Activated CD8-positive, alpha-beta T cell treated with anti-CD3 and anti-CD28 coated beads for 36 hours (primary cell): ENCODE measurements at regions of chr17 and their contacts with region 1.

Region 1: GRCh38 chr17:29369831-29370735 is 20.1 kb upstream of the TAOK1 start:
- DNase-seq: peak; percentile 57
- ATAC-seq: peak; percentile 95
- H3K4me3 Mint-ChIP-seq: no peak overlapping the region
- H3K27ac Mint-ChIP-seq: no peak overlapping the region
- H3K4me1 Mint-ChIP-seq: no peaks in the 10 kb centered on the region
- H3K27me3 Mint-ChIP-seq: no peaks in the 10 kb centered on the region
- CTCF ChIP-seq: peak; percentile 82

Region 2: DNA sequence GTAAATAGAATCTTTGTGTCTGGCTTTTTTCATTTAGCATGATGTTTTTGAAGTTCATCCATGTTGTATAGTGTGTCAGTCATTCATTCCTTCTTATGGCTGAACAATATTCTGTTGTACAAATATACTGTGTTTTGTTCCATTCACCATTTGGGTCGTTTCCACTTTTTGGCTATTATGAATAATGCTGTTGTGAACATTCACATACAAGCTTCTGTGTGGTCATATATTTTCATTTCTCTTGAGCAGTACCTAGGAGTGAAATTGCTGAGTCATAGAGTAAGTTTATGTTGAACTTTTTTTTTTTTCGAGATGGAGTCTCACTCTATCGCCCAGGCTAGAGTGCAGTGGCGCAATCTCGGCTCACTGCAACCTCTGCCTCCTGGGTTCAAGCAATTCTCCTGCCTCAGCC is 12.3 kb before region 1 on chr17:
- CTCF ChIA-PET with region 1: interaction called, 20 read pairs
- POLR2A ChIA-PET with region 1: no interaction called
- intact Hi-C with region 1: no loop called
- DNase-seq: no peak
- ATAC-seq: peak; percentile 49
- H3K4me3 Mint-ChIP-seq: no peak overlapping the region
- H3K27ac Mint-ChIP-seq: no peak overlapping the region
- H3K4me1 Mint-ChIP-seq: peaks cover 4% of the 10 kb centered on the region
- H3K27me3 Mint-ChIP-seq: no peaks in the 10 kb centered on the region
- CTCF ChIP-seq: no peak

Region 3: GRCh38 chr17:29451121-29451742 is 81.1 kb after region 1 on chr17:
- CTCF ChIA-PET with region 1: interaction called, 10 read pairs
- POLR2A ChIA-PET with region 1: no interaction called
- intact Hi-C with region 1: no loop called
- DNase-seq: no peak
- ATAC-seq: no peak
- H3K4me3 Mint-ChIP-seq: no peak overlapping the region
- H3K27ac Mint-ChIP-seq: peak overlapping the region; percentile 1
- H3K4me1 Mint-ChIP-seq: peaks cover 20% of the 10 kb centered on the region
- H3K27me3 Mint-ChIP-seq: no peaks in the 10 kb centered on the region
- CTCF ChIP-seq: no peak

Region 4: DNA sequence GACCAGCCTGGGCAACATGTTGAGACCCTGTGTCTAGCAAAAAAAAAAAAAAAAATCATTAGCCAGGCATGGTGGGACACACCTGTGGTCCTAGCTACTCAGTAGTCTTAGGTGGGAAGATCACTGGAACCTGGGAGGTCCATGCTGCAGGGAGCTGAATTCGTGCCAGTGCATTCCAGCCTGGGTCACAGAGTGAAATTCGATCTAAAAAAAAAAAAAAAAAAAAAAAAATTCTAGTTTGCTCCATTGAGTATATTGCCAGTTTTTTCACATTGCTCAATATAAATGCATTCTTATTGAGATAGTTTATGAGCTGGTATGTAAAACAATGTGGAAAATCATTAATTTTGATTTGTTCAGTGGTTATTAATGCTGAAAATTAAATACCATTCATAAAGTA is 144.7 kb after region 1 on chr17:
- CTCF ChIA-PET with region 1: interaction called, 10 read pairs
- POLR2A ChIA-PET with region 1: no interaction called
- intact Hi-C with region 1: no loop called
- DNase-seq: no peak
- ATAC-seq: no peak
- H3K4me3 Mint-ChIP-seq: no peak overlapping the region
- H3K27ac Mint-ChIP-seq: no peak overlapping the region
- H3K4me1 Mint-ChIP-seq: no peaks in the 10 kb centered on the region
- H3K27me3 Mint-ChIP-seq: no peaks in the 10 kb centered on the region
- CTCF ChIP-seq: no peak

Region 5: DNA sequence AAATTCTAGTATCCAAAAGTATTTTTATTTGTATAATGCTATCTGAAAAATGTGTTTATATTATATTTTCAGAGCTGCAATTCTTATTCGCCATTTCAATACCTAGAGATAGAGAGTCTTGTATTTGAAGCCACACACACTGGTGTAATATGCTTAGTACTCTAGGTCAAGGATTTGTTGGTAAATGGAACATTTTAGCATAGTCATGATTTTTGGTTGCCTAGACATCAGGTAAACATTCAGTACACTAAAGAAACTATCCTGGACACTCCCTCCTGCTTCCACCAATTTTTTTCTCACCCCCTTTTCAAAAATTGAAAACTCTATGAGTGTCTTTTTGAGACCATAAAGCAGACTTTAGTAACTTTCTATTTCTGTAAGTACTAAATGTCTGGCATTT is 176.0 kb after region 1 on chr17:
- CTCF ChIA-PET with region 1: interaction called, 18 read pairs
- POLR2A ChIA-PET with region 1: no interaction called
- intact Hi-C with region 1: no loop called
- DNase-seq: no peak
- ATAC-seq: no peak
- H3K4me3 Mint-ChIP-seq: no peak overlapping the region
- H3K27ac Mint-ChIP-seq: no peak overlapping the region
- H3K4me1 Mint-ChIP-seq: peaks cover 17% of the 10 kb centered on the region
- H3K27me3 Mint-ChIP-seq: no peaks in the 10 kb centered on the region
- CTCF ChIP-seq: no peak

Region 6: DNA sequence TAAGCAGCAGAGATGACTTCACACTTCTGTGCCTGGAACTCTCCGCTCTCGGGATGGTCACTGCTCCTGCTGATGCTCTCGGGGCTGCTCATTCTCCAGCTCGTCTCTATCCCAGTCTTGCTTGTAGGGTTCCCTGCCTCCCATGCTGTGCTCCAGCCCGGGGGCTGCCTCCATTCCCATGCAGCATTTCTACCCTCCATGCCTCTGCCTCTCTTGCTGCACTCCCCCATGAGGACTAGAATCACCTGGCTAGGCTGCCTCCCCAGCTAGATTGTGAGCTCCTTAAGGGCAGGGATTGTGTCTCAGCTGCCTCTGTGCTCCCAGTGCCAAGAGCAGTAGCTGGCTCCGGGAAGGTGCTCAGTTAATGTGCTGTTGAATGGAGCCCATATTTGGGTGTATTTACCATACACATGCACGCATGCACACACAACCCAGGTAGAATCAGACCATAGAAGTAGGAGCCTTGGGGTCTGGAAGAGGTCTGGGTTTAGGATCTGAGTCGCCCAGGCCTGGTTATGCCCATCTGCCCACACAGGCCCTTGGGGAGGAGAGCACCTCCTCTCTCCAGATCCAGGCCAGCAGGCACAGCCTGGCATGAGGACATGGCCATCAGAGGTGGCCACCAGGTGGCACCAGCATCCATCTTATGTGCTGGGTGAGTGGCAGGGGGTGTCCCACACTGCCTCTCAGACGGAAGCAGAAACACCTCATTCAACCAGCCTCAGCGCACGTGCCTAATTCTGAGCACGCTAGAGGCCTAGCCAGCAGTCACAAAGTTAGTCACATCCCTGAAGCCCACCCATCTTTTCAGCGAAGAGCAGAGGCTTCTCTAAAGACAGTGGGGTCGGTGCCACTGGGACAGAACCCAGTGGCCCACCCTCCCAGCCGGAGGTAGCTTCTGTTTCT is 210.0 kb after region 1 on chr17:
- CTCF ChIA-PET with region 1: interaction called, 28 read pairs
- POLR2A ChIA-PET with region 1: no interaction called
- intact Hi-C with region 1: no loop called
- DNase-seq: peak; percentile 97
- ATAC-seq: peak; percentile 97
- H3K4me3 Mint-ChIP-seq: no peak overlapping the region
- H3K27ac Mint-ChIP-seq: peak overlapping the region; percentile 89
- H3K4me1 Mint-ChIP-seq: peaks cover 27% of the 10 kb centered on the region
- H3K27me3 Mint-ChIP-seq: no peaks in the 10 kb centered on the region
- CTCF ChIP-seq: peak; percentile 83